ENCODE measurements at regions of chr5 and their contacts with region 1.

Region 1: GRCh38 chr5:78405829-78406750 is 45.7 kb downstream of the SCAMP1 start:
- DNase-seq: peak; percentile 19
- ATAC-seq: peak; percentile 76
- H3K4me3 ChIP-seq: peak overlapping the region; percentile 51; the same call in 1 of the 2 replicates
- H3K27ac ChIP-seq: peak overlapping the region; percentile 66
- H3K4me1 ChIP-seq: peaks cover 16% of the 10 kb centered on the region; the same call in 1 of the 2 replicates
- H3K27me3 ChIP-seq: no peaks in the 10 kb centered on the region
- CTCF ChIP-seq: no peak
- EP300 ChIP-seq: no peak
- POLR2A ChIP-seq: no peak
- RAD21 ChIP-seq: no peak

Region 2: GRCh38 chr5:78373231-78373630 is 32.9 kb before region 1 on chr5:
- CTCF ChIA-PET with region 1: no interaction called
- POLR2A ChIA-PET with region 1: no interaction called
- RAD21 ChIA-PET with region 1: no interaction called
- SMC1A ChIA-PET with region 1: interaction called, 4 read pairs
- in situ Hi-C with region 1: no loop called
- intact Hi-C with region 1: loop called (anchors 5 kb)
- DNase-seq: no peak
- ATAC-seq: no peak
- H3K4me3 ChIP-seq: no peak overlapping the region
- H3K27ac ChIP-seq: no peak overlapping the region
- H3K4me1 ChIP-seq: peaks cover 3% of the 10 kb centered on the region; the same call in 1 of the 2 replicates
- H3K27me3 ChIP-seq: no peaks in the 10 kb centered on the region
- CTCF ChIP-seq: no peak
- EP300 ChIP-seq: no peak
- POLR2A ChIP-seq: no peak
- RAD21 ChIP-seq: no peak

Region 3: DNA sequence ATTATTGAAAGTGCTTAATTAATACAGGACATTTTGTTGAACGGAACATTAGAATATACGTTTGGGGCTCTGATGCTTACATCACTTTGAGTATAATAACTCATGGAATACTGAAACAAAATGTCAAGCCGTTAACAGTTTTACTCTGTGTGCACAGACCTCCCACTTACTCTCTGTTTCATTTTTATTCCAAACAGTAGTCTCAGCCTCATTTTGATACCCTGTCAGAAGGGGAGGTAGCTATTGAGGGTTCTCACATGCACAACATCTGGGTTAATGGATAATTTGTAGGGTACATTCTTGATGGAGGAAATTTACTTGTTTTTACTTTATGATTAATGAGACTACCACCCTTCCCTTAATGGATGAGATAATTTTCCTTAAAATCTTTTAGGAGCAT is 13.3 kb after region 1 on chr5:
- CTCF ChIA-PET with region 1: interaction called, 9 read pairs
- POLR2A ChIA-PET with region 1: interaction called, 7 read pairs
- RAD21 ChIA-PET with region 1: interaction called, 3 read pairs
- SMC1A ChIA-PET with region 1: interaction called, 15 read pairs
- in situ Hi-C with region 1: no loop called
- intact Hi-C with region 1: no loop called
- DNase-seq: peak; percentile 5
- ATAC-seq: peak; percentile 94
- H3K4me3 ChIP-seq: no peak overlapping the region
- H3K27ac ChIP-seq: no peak overlapping the region
- H3K4me1 ChIP-seq: no peaks in the 10 kb centered on the region
- H3K27me3 ChIP-seq: no peaks in the 10 kb centered on the region
- CTCF ChIP-seq: no peak
- EP300 ChIP-seq: no peak
- POLR2A ChIP-seq: no peak
- RAD21 ChIP-seq: no peak

Region 4: DNA sequence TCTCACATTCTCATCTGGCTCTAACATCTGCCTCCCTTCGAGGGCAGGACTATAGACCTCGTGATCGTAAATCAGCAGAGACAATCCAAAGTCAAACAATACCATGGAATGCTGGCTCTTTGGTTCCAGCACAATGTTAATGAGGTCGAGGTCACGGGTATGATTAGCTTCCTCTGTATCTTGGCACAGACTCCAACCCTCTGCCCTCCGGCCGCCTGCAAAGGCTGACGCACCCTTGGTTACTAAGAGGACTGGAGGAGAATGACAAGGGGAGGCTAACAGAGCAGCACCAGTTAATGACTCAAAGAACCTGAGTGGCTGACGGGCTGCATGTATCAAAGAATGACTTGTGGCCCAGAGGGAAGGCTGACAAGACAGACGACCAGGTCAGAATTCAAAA is 232.3 kb after region 1 on chr5:
- CTCF ChIA-PET with region 1: no interaction called
- POLR2A ChIA-PET with region 1: no interaction called
- RAD21 ChIA-PET with region 1: no interaction called
- SMC1A ChIA-PET with region 1: no interaction called
- in situ Hi-C with region 1: no loop called
- intact Hi-C with region 1: no loop called
- DNase-seq: no peak
- ATAC-seq: no peak
- H3K4me3 ChIP-seq: no peak overlapping the region
- H3K27ac ChIP-seq: no peak overlapping the region
- H3K4me1 ChIP-seq: peaks cover 24% of the 10 kb centered on the region
- H3K27me3 ChIP-seq: no peaks in the 10 kb centered on the region
- CTCF ChIP-seq: no peak
- EP300 ChIP-seq: no peak
- POLR2A ChIP-seq: no peak
- RAD21 ChIP-seq: no peak

Measured in GM12878 (cell line).